ENCODE measurements at regions of chr18 and their contacts with region 1.

Region 1: DNA sequence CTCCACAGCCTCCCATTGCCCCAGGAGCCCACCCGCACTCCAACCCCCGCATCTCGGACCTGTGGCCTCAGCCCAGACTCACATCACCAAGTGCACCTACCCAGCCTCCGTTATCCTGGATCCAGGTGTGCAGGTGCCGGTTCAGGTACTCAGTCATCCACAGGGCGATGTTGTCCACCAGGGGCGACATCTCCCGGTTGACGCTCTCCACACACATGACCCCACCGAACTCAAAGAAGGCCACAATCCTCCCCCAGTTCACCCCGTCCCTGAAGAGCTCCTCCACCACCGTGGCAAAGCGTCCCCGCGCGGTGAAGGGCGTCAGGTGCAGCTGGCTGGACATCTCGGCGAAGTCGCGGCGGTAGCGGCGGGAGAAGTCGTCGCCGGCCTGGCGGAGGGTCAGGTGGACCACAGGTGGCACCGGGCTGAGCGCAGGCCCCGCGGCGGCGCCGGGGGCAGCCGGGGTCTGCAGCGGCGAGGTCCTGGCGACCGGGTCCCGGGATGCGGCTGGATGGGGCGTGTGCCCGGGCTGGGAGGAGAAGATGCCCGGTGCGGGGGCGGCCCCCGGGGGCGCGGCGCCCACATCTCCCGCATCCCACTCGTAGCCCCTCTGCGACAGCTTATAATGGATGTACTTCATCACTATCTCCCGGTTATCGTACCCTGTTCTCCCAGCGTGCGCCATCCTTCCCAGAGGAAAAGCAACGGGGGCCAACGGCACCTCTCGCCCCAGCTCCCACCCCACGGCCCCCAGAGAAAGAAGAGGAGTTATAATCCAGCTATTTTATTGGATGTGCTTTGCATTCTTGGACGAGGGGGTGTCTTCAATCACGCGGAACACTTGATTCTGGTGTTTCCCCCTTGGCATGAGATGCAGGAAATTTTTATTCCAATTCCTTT is 1.3 kb downstream of the BCL2 start:
- H3K4me3 ChIP-seq: peak overlapping the region; percentile 54
- H3K27ac ChIP-seq: peak overlapping the region; percentile 20; the same call in 1 of the 2 replicates
- H3K4me1 ChIP-seq: peaks cover 25% of the 10 kb centered on the region; the same call in 1 of the 2 replicates
- CTCF ChIP-seq: peak; percentile 98

Region 2: DNA sequence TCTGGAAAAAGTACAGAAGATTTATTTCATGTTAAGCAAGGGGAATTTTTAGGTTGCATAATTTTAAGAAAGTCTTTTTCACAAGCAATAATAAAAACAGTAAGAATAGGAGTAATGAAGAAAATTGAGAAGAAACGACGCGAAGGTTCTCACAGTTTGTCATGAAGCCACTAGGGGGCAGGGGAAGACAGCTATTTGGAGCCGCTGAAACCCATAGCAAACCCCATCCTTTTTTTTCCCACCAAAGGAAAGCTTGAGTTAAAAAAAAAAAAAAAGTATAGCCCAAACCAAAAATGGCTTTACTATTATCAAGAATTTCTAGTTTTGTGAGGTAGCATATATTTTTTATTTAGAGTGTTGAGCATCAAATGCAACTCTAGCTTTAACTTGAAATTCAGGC is 302.0 kb before region 1 on chr18:
- CTCF ChIA-PET with region 1: interaction called, 119 read pairs
- POLR2A ChIA-PET with region 1: no interaction called
- H3K4me3 ChIP-seq: no peak overlapping the region
- H3K27ac ChIP-seq: no peak overlapping the region
- H3K4me1 ChIP-seq: no peaks in the 10 kb centered on the region
- CTCF ChIP-seq: peak; percentile 32; the same call in 1 of the 2 replicates

Region 3: DNA sequence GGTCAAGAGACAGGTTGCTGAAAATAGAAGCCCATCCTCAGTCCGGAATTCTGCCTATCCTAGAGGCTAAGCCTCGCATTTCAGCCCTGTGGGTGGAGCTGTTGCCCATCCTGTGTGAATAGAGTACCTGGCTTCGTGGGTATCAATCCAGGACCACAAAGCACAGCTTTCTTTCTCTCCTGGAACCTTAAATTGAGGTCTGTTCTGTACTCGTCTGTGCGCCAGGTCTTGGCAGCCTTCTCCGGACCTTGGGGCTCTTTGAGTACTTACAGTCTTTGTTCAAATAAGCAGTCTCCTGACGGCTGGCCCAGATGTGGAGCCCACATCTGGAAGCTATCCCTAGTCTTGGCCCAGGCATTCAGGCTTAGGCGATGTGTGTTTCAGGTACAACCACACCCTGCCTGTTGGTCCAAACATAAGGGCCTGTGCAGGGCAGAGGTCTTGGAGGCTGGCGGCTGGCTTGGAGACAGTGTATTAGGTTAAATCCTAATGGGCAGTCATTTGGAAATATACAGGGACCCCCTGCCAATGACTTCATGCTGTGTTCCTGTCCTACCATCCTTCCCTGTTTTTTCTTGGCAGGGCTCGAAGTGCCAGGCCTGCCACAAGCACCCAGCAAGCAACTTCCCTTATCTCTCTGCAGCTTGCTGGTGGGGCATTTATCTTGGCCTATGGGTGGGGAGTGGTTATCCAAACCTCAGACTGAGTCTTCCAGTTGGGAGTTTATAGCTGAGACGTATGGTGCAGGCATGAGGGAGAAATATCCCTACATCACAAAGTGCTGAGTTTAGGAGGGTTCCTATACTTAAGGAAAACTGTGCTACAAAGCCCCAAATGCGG is 292.8 kb before region 1 on chr18:
- CTCF ChIA-PET with region 1: interaction called, 25 read pairs
- POLR2A ChIA-PET with region 1: no interaction called
- H3K4me3 ChIP-seq: no peak overlapping the region
- H3K27ac ChIP-seq: no peak overlapping the region
- H3K4me1 ChIP-seq: no peaks in the 10 kb centered on the region
- CTCF ChIP-seq: 0 out of 2 replicates have a peak, but pooled peaks have one; percentile 34

Region 4: GRCh38 chr18:63119647-63120046 is 198.6 kb before region 1 on chr18:
- CTCF ChIA-PET with region 1: interaction called, 11 read pairs
- POLR2A ChIA-PET with region 1: no interaction called
- H3K4me3 ChIP-seq: no peak overlapping the region
- H3K27ac ChIP-seq: no peak overlapping the region
- H3K4me1 ChIP-seq: 0 out of 2 replicates have a peak, but pooled peaks cover 3% of the 10 kb centered on the region
- CTCF ChIP-seq: peak; percentile 62

Region 5: DNA sequence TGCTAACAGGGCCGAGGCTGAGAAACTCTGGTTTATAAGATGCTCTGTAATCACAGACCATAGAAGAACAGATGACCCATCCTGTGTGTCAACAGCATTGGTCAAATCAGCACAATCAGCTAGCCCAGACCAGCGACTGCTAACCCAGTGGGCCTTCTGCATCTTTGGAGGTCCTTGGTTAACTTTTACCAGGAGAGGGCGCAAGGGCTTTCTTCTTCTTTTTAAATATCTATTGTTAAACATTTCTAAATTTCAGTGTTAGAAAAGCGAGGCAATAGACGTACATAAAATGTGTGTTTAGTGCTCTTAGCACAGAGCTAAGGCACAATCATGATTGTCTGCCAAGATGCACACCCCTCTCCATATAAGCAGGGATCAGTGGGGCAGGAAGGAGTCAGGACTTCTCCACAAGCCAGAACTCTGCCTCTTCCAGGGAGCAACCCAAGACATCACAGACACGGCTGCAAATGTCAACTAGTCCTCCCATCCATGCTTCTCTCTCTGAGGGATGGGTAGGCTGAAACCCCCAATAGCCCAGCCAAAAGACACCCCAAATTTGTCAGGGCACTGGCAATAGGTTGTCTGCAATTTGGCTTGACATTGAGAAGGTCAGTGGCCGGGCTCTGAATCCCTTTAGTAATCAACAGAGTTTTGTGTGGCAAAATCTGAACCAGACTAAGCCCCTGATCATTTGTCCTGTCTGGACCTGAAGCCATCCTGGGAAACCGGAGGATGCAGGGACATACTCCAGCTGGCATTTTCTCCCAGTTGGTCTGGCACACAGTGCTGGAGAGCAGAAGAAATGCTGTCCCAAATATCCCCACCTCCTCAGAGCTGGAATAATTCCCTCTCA is 186.9 kb before region 1 on chr18:
- CTCF ChIA-PET with region 1: interaction called, 24 read pairs
- POLR2A ChIA-PET with region 1: no interaction called
- H3K4me3 ChIP-seq: no peak overlapping the region
- H3K27ac ChIP-seq: no peak overlapping the region
- H3K4me1 ChIP-seq: no peaks in the 10 kb centered on the region
- CTCF ChIP-seq: peak; percentile 25; the same call in 1 of the 2 replicates

Region 6: GRCh38 chr18:63262369-63263335 is 55.6 kb before region 1 on chr18:
- CTCF ChIA-PET with region 1: no interaction called
- POLR2A ChIA-PET with region 1: no interaction called
- H3K4me3 ChIP-seq: no peak overlapping the region
- H3K27ac ChIP-seq: no peak overlapping the region
- H3K4me1 ChIP-seq: peaks cover 12% of the 10 kb centered on the region
- CTCF ChIP-seq: no peak

Region 7: GRCh38 chr18:63307551-63308200 is 10.6 kb before region 1 on chr18:
- CTCF ChIA-PET with region 1: interaction called, 23 read pairs
- POLR2A ChIA-PET with region 1: no interaction called
- H3K4me3 ChIP-seq: no peak overlapping the region
- H3K27ac ChIP-seq: no peak overlapping the region
- H3K4me1 ChIP-seq: peaks cover 9% of the 10 kb centered on the region
- CTCF ChIP-seq: no peak

Region 8: GRCh38 chr18:63339920-63340484 is 21.8 kb after region 1 on chr18:
- CTCF ChIA-PET with region 1: interaction called, 23 read pairs
- POLR2A ChIA-PET with region 1: no interaction called
- H3K4me3 ChIP-seq: no peak overlapping the region
- H3K27ac ChIP-seq: no peak overlapping the region
- H3K4me1 ChIP-seq: no peaks in the 10 kb centered on the region
- CTCF ChIP-seq: 0 out of 2 replicates have a peak, but pooled peaks have one; percentile 14

Measured in HEK293 (cell line).